Heart right ventricle (tissue), 16 donors: ENCODE measurements at regions of chr2 and their contacts with region 1.

Region 1: DNA sequence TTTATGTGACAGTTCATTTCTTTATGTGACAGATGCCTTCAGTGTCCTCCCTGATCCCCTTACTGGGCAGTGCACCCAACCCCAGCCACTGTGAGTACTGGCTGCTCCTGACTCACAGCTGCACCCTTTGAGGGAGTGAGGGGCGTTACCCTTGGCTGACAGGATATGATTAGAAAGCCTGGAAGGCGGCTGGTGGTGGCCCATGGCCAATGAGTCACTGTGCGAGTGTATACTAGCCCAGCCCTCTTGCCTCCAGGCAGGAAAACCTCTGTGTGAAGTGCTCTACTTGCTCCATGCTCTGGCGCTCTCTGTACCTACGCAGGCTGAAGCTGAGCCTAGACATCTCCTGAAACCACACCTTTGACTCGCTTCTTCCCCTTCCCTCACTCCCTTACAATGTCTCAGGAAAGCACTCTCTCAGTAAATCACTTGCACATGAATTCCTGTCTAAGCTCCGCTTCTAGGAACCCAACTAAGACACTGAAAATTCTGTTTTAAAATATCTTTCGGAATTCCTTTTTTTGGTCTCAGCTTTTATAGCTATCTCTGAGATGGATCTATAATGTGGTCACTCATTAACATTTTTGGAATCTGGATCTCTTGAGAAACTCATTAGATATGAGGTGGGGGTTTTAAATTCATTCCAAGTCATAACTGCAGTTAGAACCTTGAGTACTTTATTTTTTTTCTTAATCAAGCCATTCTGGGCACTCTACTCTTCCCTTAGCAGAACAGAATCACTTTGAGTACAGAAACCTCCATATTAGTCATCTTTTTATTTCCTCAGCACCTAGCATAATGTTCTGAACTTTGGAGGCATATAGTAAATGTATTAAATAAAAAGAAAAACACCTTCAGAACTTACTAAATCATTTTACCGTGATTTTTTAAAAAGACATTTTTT is 25.3 kb upstream of the STAM2 start:
- DNase-seq: peak; percentile 69 to 78
- ATAC-seq: peak; percentile 61 to 100 (median 95)
- H3K4me3 ChIP-seq: no peak overlapping the region
- H3K27ac ChIP-seq: no peak overlapping the region
- H3K4me1 ChIP-seq: peaks cover 0 to 7% (median 3%) of the 10 kb centered on the region in 9 donors
- H3K27me3 ChIP-seq: no peaks in the 10 kb centered on the region
- CTCF ChIP-seq: no peak

Region 2: DNA sequence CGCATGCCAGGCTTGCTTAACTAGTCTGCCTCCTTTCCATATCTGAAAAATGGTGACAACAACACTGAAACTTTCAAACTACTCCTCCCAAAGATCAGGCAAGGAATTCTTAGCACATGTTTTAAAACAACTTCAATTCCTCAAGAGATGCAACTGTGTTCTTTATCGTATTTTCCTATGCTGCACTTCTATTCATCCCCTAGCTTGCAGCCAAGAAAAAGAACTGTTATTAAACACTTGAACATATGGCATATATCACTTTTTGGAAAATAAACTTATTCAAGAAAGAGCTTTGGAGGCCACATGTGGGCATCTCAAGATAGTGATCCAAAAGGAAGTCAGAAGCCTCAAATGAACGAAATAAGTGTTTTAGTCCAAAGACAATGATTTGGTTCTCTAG is 50.4 kb after region 1 on chr2:
- intact Hi-C with region 1: no loop called
- DNase-seq: no peak
- ATAC-seq: no peak
- H3K4me3 ChIP-seq: no peak overlapping the region
- H3K27ac ChIP-seq: no peak overlapping the region
- H3K4me1 ChIP-seq: no peaks in the 10 kb centered on the region
- H3K27me3 ChIP-seq: peaks cover 0 to 6% (median 0%) of the 10 kb centered on the region in 7 donors
- CTCF ChIP-seq: no peak

Region 3: GRCh38 chr2:152319831-152320570 is 119.2 kb after region 1 on chr2:
- intact Hi-C with region 1: loop called in 1 of 10 experiments (anchors 10 kb)
- DNase-seq: no peak
- ATAC-seq: no peak
- H3K4me3 ChIP-seq: no peak overlapping the region
- H3K27ac ChIP-seq: no peak overlapping the region
- H3K4me1 ChIP-seq: no peaks in the 10 kb centered on the region
- H3K27me3 ChIP-seq: no peaks in the 10 kb centered on the region
- CTCF ChIP-seq: no peak